Left ventricle myocardium inferior (tissue), 1 donor: ENCODE measurements at regions of chr1 and their contacts with region 1.

Region 1: GRCh38 chr1:16354619-16355018 is 2.3 kb upstream of the FBXO42 start:
- DNase-seq: no peak
- H3K4me3 ChIP-seq: no peak overlapping the region
- H3K27ac ChIP-seq: no peak overlapping the region
- H3K4me1 ChIP-seq: peaks cover 31% of the 10 kb centered on the region
- H3K27me3 ChIP-seq: no peaks in the 10 kb centered on the region
- CTCF ChIP-seq: no peak

Region 2: GRCh38 chr1:16243936-16244649 is 110.5 kb before region 1 on chr1:
- intact Hi-C with region 1: loop called (anchors 5 kb)
- DNase-seq: peak; percentile 71
- H3K4me3 ChIP-seq: no peak overlapping the region
- H3K27ac ChIP-seq: peak overlapping the region; percentile 90
- H3K4me1 ChIP-seq: peaks cover 50% of the 10 kb centered on the region
- H3K27me3 ChIP-seq: no peaks in the 10 kb centered on the region
- CTCF ChIP-seq: peak; percentile 87

Region 3: GRCh38 chr1:16300436-16300835 is 54.2 kb before region 1 on chr1:
- intact Hi-C with region 1: no loop called
- DNase-seq: no peak
- H3K4me3 ChIP-seq: no peak overlapping the region
- H3K27ac ChIP-seq: peak overlapping the region; percentile 45
- H3K4me1 ChIP-seq: peaks cover 37% of the 10 kb centered on the region
- H3K27me3 ChIP-seq: no peaks in the 10 kb centered on the region
- CTCF ChIP-seq: no peak